Mammary epithelial cell (primary cell): ENCODE measurements at regions of chr13 and their contacts with region 1.

Region 1: GRCh38 chr13:52348983-52349780 is 56.8 kb downstream of the THSD1 start:
- DNase-seq: peak; percentile 96
- H3K4me3 ChIP-seq: no peak overlapping the region
- H3K27ac ChIP-seq: peak overlapping the region; percentile 75
- H3K4me1 ChIP-seq: peaks cover 59% of the 10 kb centered on the region
- H3K27me3 ChIP-seq: no peaks in the 10 kb centered on the region
- CTCF ChIP-seq: no peak

Region 2: DNA sequence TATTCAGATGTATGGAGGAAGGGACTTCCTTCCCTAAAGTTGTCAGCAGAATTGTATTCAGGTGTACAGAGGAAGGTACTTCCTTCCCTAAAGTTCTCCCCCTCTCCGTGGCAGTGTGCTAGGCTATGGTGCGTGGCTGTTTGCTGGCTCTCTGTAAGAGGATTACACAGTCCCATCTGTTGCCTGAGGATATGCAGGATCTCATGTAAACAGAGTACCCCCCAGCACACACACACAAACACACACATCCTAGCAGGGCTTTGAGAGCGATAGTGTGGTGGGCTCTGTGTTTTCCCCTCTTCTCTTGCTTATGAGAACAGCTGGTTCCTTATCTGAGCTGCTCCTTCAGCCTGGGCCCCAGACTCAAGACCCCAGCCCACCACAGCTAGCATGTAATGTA is 230.6 kb before region 1 on chr13:
- CTCF ChIA-PET with region 1: no interaction called
- dilution Hi-C with region 1: no loop called
- in situ Hi-C with region 1: no loop called
- intact Hi-C with region 1: no loop called
- DNase-seq: no peak
- H3K4me3 ChIP-seq: no peak overlapping the region
- H3K27ac ChIP-seq: no peak overlapping the region
- H3K4me1 ChIP-seq: no peaks in the 10 kb centered on the region
- H3K27me3 ChIP-seq: peaks cover 2% of the 10 kb centered on the region
- CTCF ChIP-seq: no peak

Region 3: GRCh38 chr13:52599848-52600603 is 250.8 kb after region 1 on chr13:
- CTCF ChIA-PET with region 1: no interaction called
- dilution Hi-C with region 1: no loop called
- in situ Hi-C with region 1: no loop called
- intact Hi-C with region 1: loop called (anchors 10 kb)
- DNase-seq: peak; percentile 32
- H3K4me3 ChIP-seq: peak overlapping the region; percentile 47 to 67 (median 67)
- H3K27ac ChIP-seq: peak overlapping the region; percentile 50
- H3K4me1 ChIP-seq: peaks cover 21% of the 10 kb centered on the region
- H3K27me3 ChIP-seq: no peaks in the 10 kb centered on the region
- CTCF ChIP-seq: no peak